MCF 10A (cell line): ENCODE measurements at regions of chr2 and their contacts with region 1.

Region 1: GRCh38 chr2:190648289-190649034 is 421 bp upstream of the NAB1 start:
- DNase-seq: peak; percentile 89
- H3K4me3 Mint-ChIP-seq: peak overlapping the region; percentile 94
- H3K27ac Mint-ChIP-seq: peak overlapping the region; percentile 85
- H3K4me1 Mint-ChIP-seq: peaks cover 25% of the 10 kb centered on the region
- H3K27me3 Mint-ChIP-seq: no peaks in the 10 kb centered on the region
- CTCF ChIP-seq: no peak

Region 2: GRCh38 chr2:190534310-190535120 is 113.9 kb before region 1 on chr2 and contains the start of gene NEMP2:
- CTCF ChIA-PET with region 1: interaction called, 3 read pairs
- POLR2A ChIA-PET with region 1: interaction called, 42 read pairs
- intact Hi-C with region 1: loop called (anchors 1 kb)
- DNase-seq: peak; percentile 77
- H3K4me3 Mint-ChIP-seq: peak within 1 kb of the TSS; percentile 80
- H3K27ac Mint-ChIP-seq: peak within 1 kb of the TSS; percentile 98
- H3K4me1 Mint-ChIP-seq: peaks cover 37% of the 10 kb centered on the region
- H3K27me3 Mint-ChIP-seq: no peaks in the 10 kb centered on the region
- CTCF ChIP-seq: no peak
- total RNA-seq, gene NEMP2: 34.2 and 46.0 TPM in 2 replicates

Region 3: GRCh38 chr2:190571686-190572085 is 76.8 kb before region 1 on chr2:
- CTCF ChIA-PET with region 1: no interaction called
- POLR2A ChIA-PET with region 1: interaction called, 18 read pairs
- intact Hi-C with region 1: no loop called
- DNase-seq: peak; percentile 43
- H3K4me3 Mint-ChIP-seq: no peak overlapping the region
- H3K27ac Mint-ChIP-seq: peak overlapping the region; percentile 77
- H3K4me1 Mint-ChIP-seq: peaks cover 41% of the 10 kb centered on the region
- H3K27me3 Mint-ChIP-seq: no peaks in the 10 kb centered on the region
- CTCF ChIP-seq: no peak

Region 4: DNA sequence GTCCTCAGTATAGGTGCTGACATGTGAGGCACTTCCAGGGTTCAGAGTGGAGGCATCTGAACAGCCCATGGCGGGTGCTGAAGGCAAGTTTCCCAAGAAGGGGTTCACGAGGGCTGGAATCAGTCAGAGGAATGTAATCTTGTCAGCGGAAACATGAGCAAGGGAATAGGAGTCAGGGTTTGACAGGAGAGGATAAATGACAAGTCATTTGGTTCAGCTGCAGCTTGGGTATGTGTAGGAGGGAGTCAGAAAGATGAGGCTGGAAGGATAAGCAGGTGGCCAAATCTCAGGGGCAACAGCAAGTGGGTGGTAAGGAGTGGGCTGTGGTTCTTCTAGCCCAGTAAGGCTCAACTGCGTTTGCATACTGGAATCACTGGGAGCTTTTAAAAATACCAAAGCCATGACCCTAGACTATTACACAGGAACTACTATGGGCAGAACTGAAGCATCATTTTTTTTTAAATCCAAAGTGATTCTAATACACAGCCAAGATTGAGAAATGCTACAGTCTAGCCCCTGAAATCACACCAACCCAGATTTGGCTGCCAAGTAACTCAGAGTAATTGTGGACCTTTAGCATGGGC is 41.4 kb before region 1 on chr2:
- CTCF ChIA-PET with region 1: interaction called, 3 read pairs
- POLR2A ChIA-PET with region 1: interaction called, 28 read pairs
- intact Hi-C with region 1: loop called (anchors 1 kb)
- DNase-seq: peak; percentile 89
- H3K4me3 Mint-ChIP-seq: peak overlapping the region; percentile 56
- H3K27ac Mint-ChIP-seq: peak overlapping the region; percentile 81
- H3K4me1 Mint-ChIP-seq: peaks cover 63% of the 10 kb centered on the region
- H3K27me3 Mint-ChIP-seq: no peaks in the 10 kb centered on the region
- CTCF ChIP-seq: no peak

Region 5: GRCh38 chr2:190664240-190664639 is 15.8 kb after region 1 on chr2:
- CTCF ChIA-PET with region 1: interaction called, 25 read pairs
- POLR2A ChIA-PET with region 1: interaction called, 160 read pairs
- intact Hi-C with region 1: no loop called
- DNase-seq: no peak
- H3K4me3 Mint-ChIP-seq: no peak overlapping the region
- H3K27ac Mint-ChIP-seq: peak overlapping the region; percentile 80
- H3K4me1 Mint-ChIP-seq: peaks cover 52% of the 10 kb centered on the region
- H3K27me3 Mint-ChIP-seq: no peaks in the 10 kb centered on the region
- CTCF ChIP-seq: no peak

Region 6: DNA sequence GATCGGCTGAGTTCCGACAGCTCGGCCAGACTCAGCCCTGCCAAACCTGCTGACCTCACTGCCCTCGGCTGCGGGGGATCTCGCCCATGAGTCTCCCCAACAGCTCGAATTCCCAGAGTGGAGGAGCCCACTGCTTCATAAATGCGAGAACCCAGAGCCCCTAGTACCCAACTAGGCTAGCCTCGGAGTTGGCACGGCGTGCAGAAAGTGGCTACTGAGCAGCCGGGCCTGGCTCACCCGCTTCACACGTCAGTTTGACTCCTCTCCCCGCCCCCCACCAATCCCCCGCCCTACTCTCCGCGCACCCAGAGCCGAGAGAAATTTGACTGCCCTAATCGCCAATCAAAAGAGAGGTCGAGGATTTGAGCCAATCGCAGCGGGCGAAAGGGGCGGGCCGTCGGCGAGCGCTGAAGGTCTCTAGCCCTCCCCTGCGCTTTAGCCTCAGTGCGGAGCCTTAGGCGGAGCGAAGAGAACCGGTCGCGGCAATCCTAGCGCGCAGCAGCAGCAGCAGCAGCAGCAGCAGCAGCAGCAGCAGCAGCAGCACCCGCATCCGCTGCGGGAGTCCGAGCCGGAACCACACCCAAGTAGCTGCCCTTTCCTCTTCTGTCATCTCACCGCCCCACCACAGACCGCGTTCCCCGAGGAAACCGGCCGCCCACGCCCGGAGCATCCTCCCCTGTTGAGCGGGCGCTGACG is 232.1 kb after region 1 on chr2 and contains the start of gene GLS:
- CTCF ChIA-PET with region 1: no interaction called
- POLR2A ChIA-PET with region 1: interaction called, 13 read pairs
- intact Hi-C with region 1: no loop called
- DNase-seq: peak; percentile 98
- H3K4me3 Mint-ChIP-seq: peak within 1 kb of the TSS; percentile 89
- H3K27ac Mint-ChIP-seq: peak within 1 kb of the TSS; percentile 82
- H3K4me1 Mint-ChIP-seq: peaks cover 11% of the 10 kb centered on the region
- H3K27me3 Mint-ChIP-seq: no peaks in the 10 kb centered on the region
- CTCF ChIP-seq: no peak
- total RNA-seq, gene GLS: 107 and 121 TPM in 2 replicates